ENCODE measurements at regions of chr11 and their contacts with region 1.

Region 1: GRCh38 chr11:48063424-48063978 is 83.1 kb downstream of the PTPRJ start:
- DNase-seq: no peak
- ATAC-seq: peak; percentile 28
- H3K4me3 ChIP-seq: no peak overlapping the region
- H3K27ac ChIP-seq: peak overlapping the region; percentile 78
- H3K4me1 ChIP-seq: peaks cover 27% of the 10 kb centered on the region
- H3K27me3 ChIP-seq: no peaks in the 10 kb centered on the region
- CTCF ChIP-seq: no peak

Region 2: GRCh38 chr11:48043111-48043990 is 20.1 kb before region 1 on chr11:
- CTCF ChIA-PET with region 1: no interaction called
- POLR2A ChIA-PET with region 1: no interaction called
- in situ Hi-C with region 1: no loop called
- intact Hi-C with region 1: no loop called
- DNase-seq: no peak
- ATAC-seq: no peak
- H3K4me3 ChIP-seq: no peak overlapping the region
- H3K27ac ChIP-seq: no peak overlapping the region
- H3K4me1 ChIP-seq: peaks cover 15% of the 10 kb centered on the region
- H3K27me3 ChIP-seq: no peaks in the 10 kb centered on the region
- CTCF ChIP-seq: no peak

Region 3: DNA sequence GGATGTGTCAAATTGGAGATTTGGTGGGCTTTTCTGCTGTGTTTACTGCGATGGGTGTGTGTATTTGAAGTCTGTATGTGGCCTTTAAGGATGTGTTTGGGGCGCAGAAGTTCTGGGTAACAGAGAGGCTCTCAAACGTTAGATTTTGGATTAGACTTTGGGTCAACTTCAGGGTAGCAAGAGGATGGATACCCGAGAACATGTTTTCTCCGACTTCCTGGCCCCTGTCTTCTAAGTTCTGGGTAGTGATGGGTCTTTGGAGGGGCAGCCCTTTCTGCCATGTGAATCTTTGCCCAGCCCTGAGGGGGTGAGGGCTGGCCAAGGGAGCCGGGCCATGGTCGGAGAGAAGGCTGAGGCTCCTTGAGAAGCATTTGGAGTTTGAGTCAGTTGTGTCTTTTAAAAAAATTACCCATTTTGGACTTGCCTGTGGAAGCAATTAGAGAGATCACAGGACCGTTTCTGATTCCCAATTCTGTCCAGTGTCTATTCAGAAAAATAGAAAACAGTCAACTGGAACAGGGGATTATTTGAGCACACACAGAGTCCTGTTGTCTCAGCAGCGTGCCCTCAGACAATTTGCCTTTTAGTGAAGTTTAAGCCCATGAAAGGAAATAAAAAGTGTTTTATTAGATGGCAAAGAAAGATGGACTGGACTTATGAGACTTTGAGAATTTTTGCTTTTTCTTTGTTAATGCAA is 31.3 kb after region 1 on chr11:
- CTCF ChIA-PET with region 1: no interaction called
- POLR2A ChIA-PET with region 1: interaction called, 12 read pairs
- in situ Hi-C with region 1: no loop called
- intact Hi-C with region 1: no loop called
- DNase-seq: no peak
- ATAC-seq: no peak
- H3K4me3 ChIP-seq: no peak overlapping the region
- H3K27ac ChIP-seq: no peak overlapping the region
- H3K4me1 ChIP-seq: peaks cover 37% of the 10 kb centered on the region
- H3K27me3 ChIP-seq: no peaks in the 10 kb centered on the region
- CTCF ChIP-seq: no peak

Region 4: DNA sequence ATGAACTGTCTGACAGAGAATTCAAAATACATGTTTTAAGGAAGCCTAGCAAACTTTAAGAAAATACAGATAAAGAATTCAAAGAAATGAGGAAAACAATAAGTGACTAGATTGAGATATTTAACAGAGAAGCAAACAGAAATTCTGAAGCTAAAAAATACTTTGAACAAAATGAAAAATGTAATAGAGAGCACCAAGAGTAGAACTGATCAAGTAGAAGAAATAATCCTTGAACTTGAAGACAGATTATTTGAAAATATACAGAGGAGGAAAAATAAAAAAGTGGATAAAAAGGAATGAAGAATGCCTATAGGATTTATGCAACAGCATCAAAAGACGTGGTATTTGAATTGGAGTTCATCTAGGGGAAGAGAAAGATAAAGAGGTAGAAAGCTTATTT is 51.2 kb after region 1 on chr11:
- CTCF ChIA-PET with region 1: no interaction called
- POLR2A ChIA-PET with region 1: interaction called, 14 read pairs
- in situ Hi-C with region 1: no loop called
- intact Hi-C with region 1: no loop called
- DNase-seq: no peak
- ATAC-seq: no peak
- H3K4me3 ChIP-seq: no peak overlapping the region
- H3K27ac ChIP-seq: no peak overlapping the region
- H3K4me1 ChIP-seq: peaks cover 4% of the 10 kb centered on the region; the same call in 1 of the 2 replicates
- H3K27me3 ChIP-seq: no peaks in the 10 kb centered on the region
- CTCF ChIP-seq: no peak

Measured in Panc1 (cell line).